A673 (cell line): ENCODE measurements at regions of chr11 and their contacts with region 1.

Region 1: GRCh38 chr11:10564696-10565318 is 3.7 kb downstream of the LYVE1 start:
- DNase-seq: peak; percentile 46
- H3K4me3 ChIP-seq: no peak overlapping the region
- H3K27ac ChIP-seq: peak overlapping the region; percentile 50
- H3K4me1 ChIP-seq: peaks cover 26% of the 10 kb centered on the region
- H3K27me3 ChIP-seq: no peaks in the 10 kb centered on the region
- CTCF ChIP-seq: peak; percentile 53

Region 2: DNA sequence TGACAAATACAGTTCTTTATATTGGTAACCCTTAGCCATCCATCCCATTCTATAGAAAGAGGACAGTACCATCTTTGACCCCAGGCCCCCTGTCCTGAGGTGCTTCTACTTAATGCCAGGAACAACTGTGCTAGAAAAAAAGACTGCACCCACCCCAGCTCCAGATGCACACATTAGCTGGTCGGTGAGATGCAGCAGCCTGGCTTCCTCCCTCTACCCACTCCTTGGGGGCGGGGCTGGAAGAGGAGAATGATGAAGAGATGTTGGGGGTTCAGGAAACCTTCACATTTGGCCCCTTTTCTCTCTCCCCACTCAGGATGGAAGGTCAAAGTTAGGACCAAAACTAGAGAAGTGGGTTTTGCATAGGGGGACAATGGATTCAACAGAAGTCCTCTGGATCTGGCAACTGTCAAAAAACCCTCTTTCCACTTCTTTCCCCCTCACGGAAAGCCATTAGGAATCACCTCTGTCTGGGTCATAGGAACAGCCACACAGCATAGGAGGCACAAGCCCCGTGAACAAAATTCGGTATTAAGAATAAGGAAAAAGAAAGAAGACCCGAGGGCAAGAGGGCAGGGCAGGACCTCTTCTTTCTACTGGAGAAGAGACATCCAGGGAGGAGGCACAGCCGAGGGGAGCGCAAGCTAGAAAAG is 1561.8 kb before region 1 on chr11:
- CTCF ChIA-PET with region 1: no interaction called
- POLR2A ChIA-PET with region 1: interaction called, 11 read pairs
- intact Hi-C with region 1: no loop called
- DNase-seq: no peak
- H3K4me3 ChIP-seq: peak overlapping the region; percentile 26
- H3K27ac ChIP-seq: no peak overlapping the region
- H3K4me1 ChIP-seq: peaks cover 14% of the 10 kb centered on the region
- H3K27me3 ChIP-seq: peaks cover 42% of the 10 kb centered on the region
- CTCF ChIP-seq: no peak

Region 3: DNA sequence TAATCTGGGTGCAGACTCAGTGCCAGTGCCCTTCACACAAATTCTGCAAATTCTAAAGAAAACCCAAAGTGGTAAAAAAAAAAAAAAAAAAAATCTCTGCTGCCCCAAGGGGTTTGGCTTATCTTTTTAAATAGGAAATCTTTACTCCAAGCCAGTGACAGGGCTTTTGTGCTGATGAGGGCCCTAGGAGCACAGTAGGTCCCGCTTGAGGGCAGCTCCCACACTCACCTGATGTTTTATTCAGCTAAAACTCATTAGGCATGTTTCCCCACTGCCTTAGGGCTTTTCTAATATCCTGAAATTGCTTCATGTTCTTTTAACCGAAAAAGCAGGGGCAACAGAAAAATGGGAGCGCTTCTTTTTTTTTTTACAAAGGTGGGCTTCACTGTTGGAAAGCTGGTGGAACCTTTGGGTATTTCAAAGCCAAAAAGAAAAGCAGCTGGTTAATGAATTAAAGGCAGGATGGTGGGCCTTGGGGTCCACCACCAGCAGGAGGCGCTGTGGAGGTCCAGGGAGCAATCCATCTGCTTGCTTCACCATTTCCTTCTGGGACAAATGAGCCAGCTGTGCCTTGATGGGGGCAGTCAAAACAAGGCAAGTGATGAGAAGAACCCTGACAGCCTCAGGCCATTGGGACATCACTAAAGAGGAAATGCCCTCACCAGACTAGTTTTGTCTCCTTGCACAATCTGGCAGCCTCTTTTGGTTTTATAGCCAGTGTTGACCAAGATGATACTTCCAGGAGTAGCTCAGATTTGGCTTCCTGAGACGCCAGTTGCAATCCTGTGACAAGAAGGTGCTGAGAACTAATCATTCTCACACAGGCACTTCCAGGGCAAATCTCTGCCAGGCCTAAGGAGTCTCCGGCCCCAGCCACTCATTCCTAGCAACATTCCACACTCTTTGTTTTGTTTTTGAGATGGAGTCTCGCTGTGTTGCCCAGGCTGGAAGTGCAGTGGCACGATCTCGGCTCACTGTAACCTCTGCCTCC is 1029.7 kb before region 1 on chr11:
- CTCF ChIA-PET with region 1: no interaction called
- POLR2A ChIA-PET with region 1: interaction called, 11 read pairs
- intact Hi-C with region 1: no loop called
- DNase-seq: peak; percentile 67
- H3K4me3 ChIP-seq: no peak overlapping the region
- H3K27ac ChIP-seq: no peak overlapping the region
- H3K4me1 ChIP-seq: no peaks in the 10 kb centered on the region
- H3K27me3 ChIP-seq: no peaks in the 10 kb centered on the region
- CTCF ChIP-seq: peak; percentile 85

Region 4: GRCh38 chr11:10233581-10233980 is 331.2 kb before region 1 on chr11:
- CTCF ChIA-PET with region 1: no interaction called
- POLR2A ChIA-PET with region 1: no interaction called
- intact Hi-C with region 1: no loop called
- DNase-seq: peak; percentile 29
- H3K4me3 ChIP-seq: no peak overlapping the region
- H3K27ac ChIP-seq: no peak overlapping the region
- H3K4me1 ChIP-seq: no peaks in the 10 kb centered on the region
- H3K27me3 ChIP-seq: no peaks in the 10 kb centered on the region
- CTCF ChIP-seq: no peak

Region 5: GRCh38 chr11:10653926-10654810 is 89.4 kb after region 1 on chr11:
- CTCF ChIA-PET with region 1: no interaction called
- POLR2A ChIA-PET with region 1: interaction called, 4 read pairs
- intact Hi-C with region 1: loop called (anchors 1 kb)
- DNase-seq: peak; percentile 73
- H3K4me3 ChIP-seq: no peak overlapping the region
- H3K27ac ChIP-seq: peak overlapping the region; percentile 68
- H3K4me1 ChIP-seq: peaks cover 73% of the 10 kb centered on the region
- H3K27me3 ChIP-seq: no peaks in the 10 kb centered on the region
- CTCF ChIP-seq: peak; percentile 74